ENCODE measurements at regions of chr17 and their contacts with region 1.

Region 1: GRCh38 chr17:71163121-71163812 is 957.6 kb upstream of the SOX9 start:
- DNase-seq: no peak
- H3K4me3 ChIP-seq: no peak overlapping the region
- H3K27me3 ChIP-seq: 0 out of 2 replicates have a peak, but pooled peaks cover under 1% of the 10 kb centered on the region
- CTCF ChIP-seq: no peak

Region 2: DNA sequence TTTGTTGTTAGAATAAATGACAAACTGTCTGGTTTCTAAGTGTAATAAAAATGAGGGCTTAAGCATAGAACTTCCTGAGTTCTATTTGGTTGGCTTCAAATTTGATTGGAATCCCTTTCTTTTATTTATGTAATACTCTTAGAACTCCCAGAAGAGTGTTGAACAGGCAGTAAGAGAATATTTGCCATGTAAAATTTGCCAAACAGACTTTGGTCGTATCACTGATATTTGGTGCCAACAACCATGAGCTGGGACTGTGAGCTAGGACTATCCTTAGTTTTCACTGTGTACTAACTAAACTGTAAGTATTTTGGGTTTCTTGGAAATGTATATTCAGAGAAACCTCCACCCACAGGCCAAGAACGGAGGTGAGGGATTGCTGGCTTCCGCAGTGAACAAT is 13.7 kb before region 1 on chr17:
- CTCF ChIA-PET with region 1: no interaction called
- POLR2A ChIA-PET with region 1: no interaction called
- DNase-seq: no peak
- H3K4me3 ChIP-seq: no peak overlapping the region
- H3K27me3 ChIP-seq: no peaks in the 10 kb centered on the region
- CTCF ChIP-seq: no peak

Region 3: GRCh38 chr17:71173991-71174390 is 10.7 kb after region 1 on chr17:
- CTCF ChIA-PET with region 1: no interaction called
- POLR2A ChIA-PET with region 1: no interaction called
- DNase-seq: no peak
- H3K4me3 ChIP-seq: no peak overlapping the region
- H3K27me3 ChIP-seq: no peaks in the 10 kb centered on the region
- CTCF ChIP-seq: no peak

Region 4: DNA sequence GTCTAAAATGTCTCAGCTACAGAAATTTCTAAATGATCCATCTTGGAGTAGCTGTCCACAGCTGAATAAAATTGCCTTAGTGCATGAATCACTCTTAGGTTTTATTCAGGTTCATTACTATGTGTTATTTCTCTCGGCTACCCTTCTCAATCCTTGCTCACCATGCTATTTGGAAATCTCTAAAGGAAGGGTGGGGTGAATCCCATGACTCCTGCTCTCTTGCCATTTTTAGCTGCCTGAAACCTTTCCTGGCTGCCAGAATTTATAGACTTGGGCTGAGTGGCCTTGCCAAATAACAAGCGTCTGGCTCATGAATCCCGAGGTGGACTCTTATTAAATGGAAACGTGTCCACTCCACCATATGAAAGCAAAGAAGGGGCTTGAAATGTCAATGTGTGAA is 21.4 kb after region 1 on chr17:
- CTCF ChIA-PET with region 1: no interaction called
- POLR2A ChIA-PET with region 1: interaction called, 10 read pairs
- DNase-seq: no peak
- H3K4me3 ChIP-seq: no peak overlapping the region
- H3K27me3 ChIP-seq: no peaks in the 10 kb centered on the region
- CTCF ChIP-seq: no peak

Region 5: GRCh38 chr17:71511266-71511995 is 348.2 kb after region 1 on chr17:
- CTCF ChIA-PET with region 1: no interaction called
- POLR2A ChIA-PET with region 1: no interaction called
- DNase-seq: no peak
- H3K4me3 ChIP-seq: no peak overlapping the region
- H3K27me3 ChIP-seq: no peaks in the 10 kb centered on the region
- CTCF ChIP-seq: no peak